ENCODE measurements at regions of chr17 and their contacts with region 1.

Region 1: GRCh38 chr17:9999919-10000695 is 95.0 kb upstream of the RCVRN start:
- DNase-seq: no peak
- H3K4me3 ChIP-seq: no peak overlapping the region
- H3K4me3 Mint-ChIP-seq: no peak overlapping the region
- H3K27ac Mint-ChIP-seq: no peak overlapping the region
- H3K4me1 ChIP-seq: no peaks in the 10 kb centered on the region
- H3K4me1 Mint-ChIP-seq: no peaks in the 10 kb centered on the region
- H3K27me3 ChIP-seq: no peaks in the 10 kb centered on the region
- H3K27me3 Mint-ChIP-seq: no peaks in the 10 kb centered on the region
- CTCF ChIP-seq: no peak

Region 2: GRCh38 chr17:9982159-9982558 is 17.9 kb before region 1 on chr17:
- CTCF ChIA-PET with region 1: no interaction called
- POLR2A ChIA-PET with region 1: no interaction called
- intact Hi-C with region 1: loop called (anchors 2 kb)
- DNase-seq: peak in 1 of 2 experiments; percentile 4
- H3K4me3 ChIP-seq: no peak overlapping the region
- H3K4me3 Mint-ChIP-seq: no peak overlapping the region
- H3K27ac Mint-ChIP-seq: no peak overlapping the region
- H3K4me1 ChIP-seq: no peaks in the 10 kb centered on the region
- H3K4me1 Mint-ChIP-seq: no peaks in the 10 kb centered on the region
- H3K27me3 ChIP-seq: no peaks in the 10 kb centered on the region
- H3K27me3 Mint-ChIP-seq: peaks cover 5% of the 10 kb centered on the region
- CTCF ChIP-seq: peak in 1 of 2 experiments; percentile 33

Measured in Caco-2 (cell line).